ENCODE measurements at regions of chr2 and their contacts with region 1.

Region 1: GRCh38 chr2:231411831-231412617 is 16.5 kb downstream of the B3GNT7 start:
- DNase-seq: peak; percentile 82
- H3K4me3 ChIP-seq: peak overlapping the region; percentile 55
- H3K27ac ChIP-seq: no peak overlapping the region
- H3K4me1 ChIP-seq: no peaks in the 10 kb centered on the region
- H3K27me3 ChIP-seq: no peaks in the 10 kb centered on the region
- CTCF ChIP-seq: peak; percentile 85

Region 2: DNA sequence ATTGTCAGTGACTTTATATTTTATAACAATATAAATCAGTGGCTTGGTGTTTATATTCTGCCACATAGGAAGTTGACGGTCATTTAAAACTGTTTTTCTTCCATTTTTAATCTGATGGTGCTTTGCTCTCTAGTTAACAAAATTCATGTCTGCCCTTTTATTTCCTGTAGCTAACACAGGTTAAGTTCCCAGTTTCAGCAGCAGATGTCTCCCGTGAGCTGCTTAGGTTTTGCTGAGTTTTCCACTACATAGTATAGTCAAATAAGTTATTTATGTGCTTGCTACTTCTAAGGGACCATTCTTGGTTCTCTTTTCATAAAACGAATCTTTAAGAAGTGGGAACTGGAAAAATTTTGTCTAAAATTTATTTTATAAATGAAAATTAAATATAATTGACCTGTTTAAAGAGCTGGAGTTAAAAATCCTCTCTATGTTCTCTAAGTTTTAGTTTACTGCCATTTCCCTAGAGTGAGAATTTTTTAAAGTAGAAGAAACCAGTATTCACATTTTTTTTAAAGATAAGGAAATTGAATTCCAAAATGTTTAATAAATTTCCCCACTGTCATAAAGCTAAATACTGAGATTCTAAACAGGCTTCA is 307.8 kb before region 1 on chr2:
- CTCF ChIA-PET with region 1: no interaction called
- POLR2A ChIA-PET with region 1: no interaction called
- intact Hi-C with region 1: loop called (anchors 5 kb)
- DNase-seq: peak; percentile 76
- H3K4me3 ChIP-seq: no peak overlapping the region
- H3K27ac ChIP-seq: no peak overlapping the region
- H3K4me1 ChIP-seq: no peaks in the 10 kb centered on the region
- H3K27me3 ChIP-seq: no peaks in the 10 kb centered on the region
- CTCF ChIP-seq: peak; percentile 80

Region 3: DNA sequence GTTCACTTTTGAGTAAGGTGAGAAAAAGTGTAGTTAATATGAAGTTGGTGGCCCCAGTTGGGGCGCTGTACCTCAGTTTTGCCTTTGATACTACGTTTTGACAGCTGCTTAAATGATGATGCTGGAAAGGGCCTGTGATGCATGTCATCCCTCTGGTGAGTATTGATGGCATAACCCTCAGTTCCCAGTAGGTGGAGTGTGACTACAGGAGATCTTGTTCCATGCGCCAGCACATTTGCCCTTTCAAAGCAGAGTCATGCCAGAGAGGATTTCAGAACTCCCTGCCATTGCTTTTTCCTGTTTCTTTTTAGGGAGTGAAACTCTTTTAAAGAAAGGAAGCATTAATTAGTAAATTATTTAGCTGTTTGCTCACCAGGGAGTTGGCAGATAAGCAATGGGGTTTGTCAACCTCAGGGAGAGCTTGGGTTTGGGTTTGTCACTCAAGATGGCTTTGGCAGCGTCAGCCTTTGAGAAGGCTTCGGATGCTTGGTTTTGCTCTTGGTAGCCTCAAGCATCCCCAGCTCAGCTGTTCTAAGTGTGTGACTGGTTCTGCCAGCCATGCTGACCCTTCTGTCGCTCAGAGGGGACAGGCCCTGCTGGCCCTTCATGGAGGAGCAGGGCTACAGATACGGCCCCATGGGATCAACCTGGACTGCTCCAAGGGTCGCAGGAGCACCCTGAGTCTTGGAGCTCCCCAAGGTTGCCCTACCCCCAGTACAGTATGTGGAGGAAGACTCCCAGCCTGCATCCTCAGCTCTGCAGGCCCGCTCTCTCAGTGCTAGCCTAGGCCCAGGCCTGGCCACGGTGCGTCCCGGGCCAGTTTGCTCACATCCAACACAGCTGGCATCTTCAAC is 184.5 kb before region 1 on chr2:
- CTCF ChIA-PET with region 1: no interaction called
- POLR2A ChIA-PET with region 1: no interaction called
- intact Hi-C with region 1: loop called (anchors 5 kb)
- DNase-seq: peak; percentile 82
- H3K4me3 ChIP-seq: no peak overlapping the region
- H3K27ac ChIP-seq: no peak overlapping the region
- H3K4me1 ChIP-seq: no peaks in the 10 kb centered on the region
- H3K27me3 ChIP-seq: no peaks in the 10 kb centered on the region
- CTCF ChIP-seq: peak; percentile 83

Region 4: GRCh38 chr2:231297108-231297908 is 114.7 kb before region 1 on chr2:
- CTCF ChIA-PET with region 1: no interaction called
- POLR2A ChIA-PET with region 1: no interaction called
- intact Hi-C with region 1: loop called (anchors 5 kb)
- DNase-seq: peak; percentile 31
- H3K4me3 ChIP-seq: no peak overlapping the region
- H3K27ac ChIP-seq: no peak overlapping the region
- H3K4me1 ChIP-seq: no peaks in the 10 kb centered on the region
- H3K27me3 ChIP-seq: no peaks in the 10 kb centered on the region
- CTCF ChIP-seq: peak; percentile 66

Region 5: GRCh38 chr2:231482806-231483391 is 70.9 kb after region 1 on chr2:
- CTCF ChIA-PET with region 1: no interaction called
- POLR2A ChIA-PET with region 1: no interaction called
- intact Hi-C with region 1: no loop called
- DNase-seq: peak; percentile 71
- H3K4me3 ChIP-seq: peak overlapping the region; percentile 22
- H3K27ac ChIP-seq: peak overlapping the region; percentile 50
- H3K4me1 ChIP-seq: no peaks in the 10 kb centered on the region
- H3K27me3 ChIP-seq: no peaks in the 10 kb centered on the region
- CTCF ChIP-seq: peak; percentile 93